ENCODE measurements at regions of chr19 and their contacts with region 1.

Region 1: GRCh38 chr19:15146691-15147489 is 39.7 kb downstream of the SYDE1 start:
- DNase-seq: no peak
- H3K4me3 ChIP-seq: no peak overlapping the region
- H3K4me3 Mint-ChIP-seq: no peak overlapping the region
- H3K27ac ChIP-seq: no peak overlapping the region
- H3K27ac Mint-ChIP-seq: no peak overlapping the region
- H3K4me1 ChIP-seq: no peaks in the 10 kb centered on the region
- H3K4me1 Mint-ChIP-seq: peaks cover 0 to 5% (median 4%) of the 10 kb centered on the region in 4 donors
- H3K27me3 ChIP-seq: no peaks in the 10 kb centered on the region
- H3K27me3 Mint-ChIP-seq: peaks cover 4% of the 10 kb centered on the region in 2 donors

Region 2: DNA sequence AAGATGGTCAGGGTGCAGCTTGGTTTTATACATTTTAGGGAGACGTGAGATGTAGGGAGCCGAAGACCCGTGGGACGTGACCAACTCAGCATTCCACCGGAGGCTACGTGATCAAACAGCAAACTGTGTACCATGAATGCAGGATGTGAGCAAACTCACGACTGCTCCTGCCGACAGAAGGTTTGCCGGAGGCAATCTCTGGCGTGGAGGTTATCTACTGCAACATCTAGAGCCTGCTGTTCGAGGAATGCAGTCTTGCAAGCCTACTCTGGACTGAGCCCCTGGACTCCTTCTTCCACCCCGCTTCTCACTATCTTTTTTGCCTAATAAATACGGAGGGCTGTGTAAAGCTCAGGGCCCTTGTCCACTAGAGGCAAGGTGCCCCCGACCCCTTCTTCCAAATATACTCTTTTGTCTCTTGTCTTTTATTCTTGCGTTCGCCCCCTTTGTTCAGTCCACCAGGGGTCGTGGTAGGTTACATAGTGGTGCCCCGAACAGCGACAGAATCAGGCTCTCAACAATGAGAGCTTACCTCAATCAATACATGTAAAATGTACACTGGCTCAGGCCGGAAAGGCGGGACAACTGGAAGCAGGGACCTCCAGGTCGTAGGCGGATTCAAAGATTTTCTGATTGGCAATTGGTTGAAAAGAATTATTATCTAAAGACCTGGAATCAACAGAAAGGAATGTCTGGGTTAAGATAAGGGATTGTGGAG is 73.8 kb before region 1 on chr19:
- CTCF ChIA-PET with region 1: no interaction called
- POLR2A ChIA-PET with region 1: no interaction called
- intact Hi-C with region 1: no loop called
- DNase-seq: no peak
- H3K4me3 ChIP-seq: no peak overlapping the region
- H3K4me3 Mint-ChIP-seq: no peak overlapping the region
- H3K27ac ChIP-seq: no peak overlapping the region
- H3K27ac Mint-ChIP-seq: no peak overlapping the region
- H3K4me1 ChIP-seq: no peaks in the 10 kb centered on the region
- H3K4me1 Mint-ChIP-seq: no peaks in the 10 kb centered on the region
- H3K27me3 ChIP-seq: no peaks in the 10 kb centered on the region
- H3K27me3 Mint-ChIP-seq: peaks cover 3 to 15% of the 10 kb centered on the region in 2 donors

Region 3: GRCh38 chr19:15091901-15092753 is 54.8 kb before region 1 on chr19:
- CTCF ChIA-PET with region 1: interaction called, 82 read pairs
- POLR2A ChIA-PET with region 1: no interaction called
- intact Hi-C with region 1: loop called (anchors 1 kb)
- DNase-seq: peak; percentile 56 to 67 (median 65)
- H3K4me3 ChIP-seq: no peak overlapping the region
- H3K4me3 Mint-ChIP-seq: peak overlapping the region in 1 of 8 donors; percentile 8
- H3K27ac ChIP-seq: no peak overlapping the region
- H3K27ac Mint-ChIP-seq: peak overlapping the region in 2 of 7 donors; percentile 63 to 65
- H3K4me1 ChIP-seq: peaks cover 6% of the 10 kb centered on the region
- H3K4me1 Mint-ChIP-seq: peaks cover 0 to 4% (median 3%) of the 10 kb centered on the region in 4 donors
- H3K27me3 ChIP-seq: no peaks in the 10 kb centered on the region
- H3K27me3 Mint-ChIP-seq: peaks cover 5 to 9% of the 10 kb centered on the region in 2 donors

Measured in CD4-positive, alpha-beta memory T cell (primary cell).